Ovary (tissue), 10 donors: ENCODE measurements at regions of chrX and their contacts with region 1.

Region 1: GRCh38 chrX:101485199-101485949 is at the start of gene ARMCX4:
- DNase-seq: peak; percentile 80 to 85 (median 84)
- H3K4me3 ChIP-seq: peak within 1 kb of the TSS; percentile 40
- H3K27ac ChIP-seq: peak within 1 kb of the TSS; percentile 68 to 83
- H3K4me1 ChIP-seq: peaks cover 8% of the 10 kb centered on the region
- H3K27me3 ChIP-seq: no peaks in the 10 kb centered on the region
- CTCF ChIP-seq: no peak
- EP300 ChIP-seq: no peak
- POLR2A ChIP-seq: peak; percentile 54
- total RNA-seq, gene ARMCX4: 17.3 to 47.5 (median 32.0) TPM

Region 2: DNA sequence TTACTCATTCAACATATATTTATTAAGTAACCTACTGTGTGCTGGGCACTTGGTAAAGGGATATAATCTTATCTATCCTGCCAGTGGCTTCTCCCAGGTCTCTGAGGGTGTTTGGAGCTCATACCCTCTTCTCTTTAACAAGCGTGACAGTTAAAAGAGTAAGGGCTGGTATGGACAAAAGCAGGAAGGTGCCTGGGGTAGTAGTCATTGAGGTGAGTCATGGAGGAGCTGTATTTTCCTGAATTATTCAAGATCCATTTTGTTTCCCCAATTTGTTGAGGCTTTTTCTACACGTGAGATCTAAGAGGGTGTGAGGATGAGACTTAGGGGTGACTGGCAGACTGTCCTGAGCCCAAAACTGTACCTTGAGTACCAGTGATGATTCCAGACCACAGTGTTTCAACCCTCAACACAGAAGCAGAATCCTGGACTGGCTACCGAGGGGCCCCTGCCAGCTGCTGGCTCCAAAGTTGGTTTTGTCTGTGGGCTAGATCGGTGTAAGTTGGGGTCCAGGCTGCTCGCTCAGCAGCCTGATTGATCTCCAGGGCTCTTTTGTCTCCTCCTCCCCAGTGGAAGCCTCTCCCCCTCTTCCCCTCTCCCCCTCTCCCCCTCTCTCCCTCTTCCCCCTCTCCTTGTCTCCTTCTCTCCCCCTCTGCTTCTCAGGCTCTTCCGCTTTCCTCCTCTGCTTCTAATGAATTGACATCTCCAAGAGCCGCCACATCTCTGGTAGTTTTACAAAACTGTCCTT is 266.1 kb before region 1 on chrX and contains the start of gene DRP2:
- intact Hi-C with region 1: no loop called
- DNase-seq: no peak
- H3K4me3 ChIP-seq: no peak within 1 kb of the TSS
- H3K27ac ChIP-seq: no peak within 1 kb of the TSS
- H3K4me1 ChIP-seq: no peaks in the 10 kb centered on the region
- H3K27me3 ChIP-seq: no peaks in the 10 kb centered on the region
- CTCF ChIP-seq: no peak
- EP300 ChIP-seq: no peak
- POLR2A ChIP-seq: no peak
- total RNA-seq, gene DRP2: 0.34 to 2.4 (median 0.60) TPM

Region 3: GRCh38 chrX:101232316-101232715 is 253.1 kb before region 1 on chrX:
- intact Hi-C with region 1: no loop called
- DNase-seq: no peak
- H3K4me3 ChIP-seq: no peak overlapping the region
- H3K27ac ChIP-seq: no peak overlapping the region
- H3K4me1 ChIP-seq: no peaks in the 10 kb centered on the region
- H3K27me3 ChIP-seq: no peaks in the 10 kb centered on the region
- CTCF ChIP-seq: no peak
- EP300 ChIP-seq: no peak
- POLR2A ChIP-seq: no peak

Region 4: GRCh38 chrX:101395789-101396188 is 89.6 kb before region 1 on chrX:
- intact Hi-C with region 1: no loop called
- DNase-seq: no peak
- H3K4me3 ChIP-seq: no peak overlapping the region
- H3K27ac ChIP-seq: no peak overlapping the region
- H3K4me1 ChIP-seq: no peaks in the 10 kb centered on the region
- H3K27me3 ChIP-seq: no peaks in the 10 kb centered on the region
- CTCF ChIP-seq: no peak
- EP300 ChIP-seq: no peak
- POLR2A ChIP-seq: no peak

Region 5: GRCh38 chrX:101415180-101416145 is 69.9 kb before region 1 on chrX:
- intact Hi-C with region 1: loop called in 1 of 4 experiments (anchors 10 kb)
- DNase-seq: peak in 3 of 5 donors; percentile 27 to 42 (median 40)
- H3K4me3 ChIP-seq: no peak overlapping the region
- H3K27ac ChIP-seq: peak overlapping the region; percentile 4 to 70
- H3K4me1 ChIP-seq: peaks cover 6% of the 10 kb centered on the region
- H3K27me3 ChIP-seq: no peaks in the 10 kb centered on the region
- CTCF ChIP-seq: peak; percentile 56 to 74 (median 59)
- EP300 ChIP-seq: no peak
- POLR2A ChIP-seq: no peak